ENCODE measurements at regions of chrX and their contacts with region 1.

Region 1: GRCh38 chrX:130196466-130196865 is 24.7 kb downstream of the RAB33A start:
- DNase-seq: no peak
- H3K4me3 Mint-ChIP-seq: no peak overlapping the region
- H3K27ac Mint-ChIP-seq: no peak overlapping the region
- H3K4me1 Mint-ChIP-seq: no peaks in the 10 kb centered on the region
- H3K27me3 Mint-ChIP-seq: peaks cover 13% of the 10 kb centered on the region
- CTCF ChIP-seq: no peak

Region 2: DNA sequence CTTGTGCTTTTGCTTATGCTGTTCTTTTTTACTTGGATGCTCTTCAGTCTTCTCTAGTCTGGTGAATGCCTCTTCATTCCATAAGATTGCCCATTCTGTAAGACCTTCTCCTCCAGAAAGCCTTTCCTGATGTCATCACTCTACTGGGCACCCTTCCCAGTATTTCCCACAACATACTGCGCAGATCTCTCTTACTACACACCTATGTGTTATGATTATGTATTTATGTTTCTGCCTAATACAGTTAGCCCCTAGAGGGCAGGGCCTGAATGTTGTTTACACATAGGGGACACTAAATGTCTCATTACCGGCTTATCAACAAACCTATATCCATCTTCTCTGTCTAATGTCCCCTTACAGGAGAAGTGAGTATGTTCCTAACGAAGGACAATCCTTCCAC is 52.0 kb before region 1 on chrX:
- CTCF ChIA-PET with region 1: interaction called, 9 read pairs
- POLR2A ChIA-PET with region 1: interaction called, 3 read pairs
- intact Hi-C with region 1: loop called (anchors 1 kb)
- DNase-seq: peak; percentile 84
- H3K4me3 Mint-ChIP-seq: no peak overlapping the region
- H3K27ac Mint-ChIP-seq: no peak overlapping the region
- H3K4me1 Mint-ChIP-seq: peaks cover 7% of the 10 kb centered on the region
- H3K27me3 Mint-ChIP-seq: peaks cover 67% of the 10 kb centered on the region
- CTCF ChIP-seq: peak; percentile 19

Region 3: GRCh38 chrX:130176354-130176776 is 20.1 kb before region 1 on chrX:
- CTCF ChIA-PET with region 1: interaction called, 10 read pairs
- POLR2A ChIA-PET with region 1: no interaction called
- intact Hi-C with region 1: no loop called
- DNase-seq: no peak
- H3K4me3 Mint-ChIP-seq: no peak overlapping the region
- H3K27ac Mint-ChIP-seq: no peak overlapping the region
- H3K4me1 Mint-ChIP-seq: peaks cover 12% of the 10 kb centered on the region
- H3K27me3 Mint-ChIP-seq: peaks cover 41% of the 10 kb centered on the region
- CTCF ChIP-seq: no peak

Region 4: GRCh38 chrX:130211415-130212186 is 15.1 kb after region 1 on chrX:
- CTCF ChIA-PET with region 1: interaction called, 11 read pairs
- POLR2A ChIA-PET with region 1: no interaction called
- intact Hi-C with region 1: no loop called
- DNase-seq: no peak
- H3K4me3 Mint-ChIP-seq: no peak overlapping the region
- H3K27ac Mint-ChIP-seq: no peak overlapping the region
- H3K4me1 Mint-ChIP-seq: no peaks in the 10 kb centered on the region
- H3K27me3 Mint-ChIP-seq: peaks cover 34% of the 10 kb centered on the region
- CTCF ChIP-seq: no peak

Region 5: DNA sequence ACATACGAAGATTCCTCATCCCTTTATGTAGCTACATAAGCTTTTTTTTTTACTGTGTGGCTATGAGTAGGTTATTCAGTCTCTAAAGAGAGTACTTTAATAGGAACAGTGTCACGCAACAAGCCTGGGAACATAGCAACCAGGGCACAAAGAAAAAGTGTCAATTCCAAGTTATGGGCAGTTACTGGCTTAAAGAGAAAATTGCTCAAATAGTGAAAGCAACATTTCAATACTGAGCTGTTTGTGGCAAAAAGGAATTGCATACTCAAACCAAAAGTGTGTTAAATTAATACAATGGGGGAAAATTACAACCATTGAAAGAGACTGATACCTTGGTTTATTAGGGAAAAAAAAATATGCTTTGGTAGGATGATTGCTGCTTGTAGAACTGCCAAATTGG is 747.8 kb after region 1 on chrX:
- CTCF ChIA-PET with region 1: no interaction called
- POLR2A ChIA-PET with region 1: no interaction called
- intact Hi-C with region 1: no loop called
- DNase-seq: no peak
- H3K4me3 Mint-ChIP-seq: no peak overlapping the region
- H3K27ac Mint-ChIP-seq: no peak overlapping the region
- H3K4me1 Mint-ChIP-seq: no peaks in the 10 kb centered on the region
- H3K27me3 Mint-ChIP-seq: peaks cover 70% of the 10 kb centered on the region
- CTCF ChIP-seq: no peak